ENCODE measurements at regions of chr10 and their contacts with region 1.

Region 1: GRCh38 chr10:114795039-114795438 is 26.5 kb upstream of the FHIP2A start:
- DNase-seq: no peak
- ATAC-seq: no peak
- H3K4me3 ChIP-seq: no peak overlapping the region
- H3K27ac ChIP-seq: no peak overlapping the region
- H3K4me1 ChIP-seq: no peaks in the 10 kb centered on the region
- H3K27me3 ChIP-seq: no peaks in the 10 kb centered on the region
- CTCF ChIP-seq: no peak

Region 2: DNA sequence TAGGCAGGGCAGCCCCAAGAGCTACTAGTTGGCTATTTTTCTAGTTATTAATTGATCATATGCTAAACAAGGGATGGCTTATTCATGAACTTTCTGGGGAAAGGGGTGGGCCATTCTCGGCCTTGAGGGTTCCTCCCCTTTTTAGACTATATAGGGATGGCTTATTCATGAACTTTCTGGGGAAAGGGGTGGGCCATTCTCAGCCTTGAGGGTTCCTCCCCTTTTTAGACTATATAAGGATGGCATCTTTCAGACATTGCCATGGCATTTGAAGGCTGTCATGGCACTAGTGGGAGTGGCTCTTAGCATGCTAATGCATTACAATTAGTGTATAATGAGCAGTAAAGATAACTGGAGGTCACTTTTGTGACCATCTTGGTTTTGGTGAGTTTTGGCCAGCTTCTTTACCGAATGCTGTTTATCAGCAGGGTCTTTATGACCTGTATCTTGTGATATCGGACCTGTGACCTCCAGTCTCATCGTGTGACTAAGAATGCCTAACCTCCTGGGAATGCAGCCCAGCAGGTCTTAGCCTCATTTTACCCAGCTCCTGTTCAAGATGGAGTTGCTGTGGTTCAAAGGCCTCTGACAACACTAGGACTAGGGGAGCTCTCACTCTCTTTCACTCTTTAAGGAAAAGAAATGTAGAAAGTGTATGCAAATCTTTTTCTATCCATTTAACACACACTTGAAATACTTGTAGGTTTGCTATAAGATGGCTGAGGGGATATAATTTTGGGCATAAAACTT is 34.3 kb after region 1 on chr10:
- CTCF ChIA-PET with region 1: no interaction called
- POLR2A ChIA-PET with region 1: interaction called, 15 read pairs
- in situ Hi-C with region 1: no loop called
- intact Hi-C with region 1: no loop called
- DNase-seq: no peak
- ATAC-seq: no peak
- H3K4me3 ChIP-seq: no peak overlapping the region
- H3K27ac ChIP-seq: no peak overlapping the region
- H3K4me1 ChIP-seq: peaks cover 20% of the 10 kb centered on the region
- H3K27me3 ChIP-seq: no peaks in the 10 kb centered on the region
- CTCF ChIP-seq: no peak